AG04450 (cell line): ENCODE measurements at regions of chr14 and their contacts with region 1.

Region 1: DNA sequence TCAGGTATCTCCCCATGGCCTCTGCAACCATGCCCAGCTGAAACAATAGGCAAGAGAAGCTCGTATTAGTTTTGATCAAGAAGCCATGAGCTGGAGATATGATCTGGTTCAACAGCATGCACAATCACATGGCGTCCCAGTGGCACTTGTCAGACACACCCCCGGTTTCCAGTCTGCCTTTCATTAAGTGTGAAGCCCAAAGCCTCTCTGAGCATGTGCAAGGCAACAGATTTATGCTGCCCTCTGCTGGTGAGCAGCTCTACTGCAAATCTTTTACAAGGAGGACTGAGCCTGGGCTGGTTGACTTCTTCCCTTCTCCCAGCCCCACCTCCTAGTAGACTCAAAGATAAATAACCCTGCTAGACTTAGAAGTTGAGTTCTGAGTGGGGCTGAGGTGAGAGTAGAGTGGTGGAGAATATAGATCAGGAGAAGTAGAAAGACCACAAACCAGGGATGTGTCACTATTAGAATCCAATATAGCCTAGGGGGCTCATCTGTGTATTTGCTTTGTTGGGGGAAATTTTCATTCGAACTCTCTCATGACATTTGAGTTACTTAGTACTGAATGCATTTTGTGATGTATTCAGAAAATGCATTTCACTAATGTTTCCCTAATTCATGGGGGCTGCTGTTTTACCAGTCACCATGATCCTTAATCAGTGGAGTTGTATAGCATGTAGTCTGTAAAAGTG is 53.7 kb upstream of the MBIP start:
- DNase-seq: peak; percentile 56
- H3K4me3 ChIP-seq: no peak overlapping the region
- H3K27ac ChIP-seq: no peak overlapping the region
- H3K27me3 ChIP-seq: no peaks in the 10 kb centered on the region
- CTCF ChIP-seq: peak; percentile 91

Region 2: GRCh38 chr14:35708073-35708472 is 666.1 kb before region 1 on chr14:
- CTCF ChIA-PET with region 1: no interaction called
- POLR2A ChIA-PET with region 1: no interaction called
- DNase-seq: no peak
- H3K4me3 ChIP-seq: no peak overlapping the region
- H3K27ac ChIP-seq: no peak overlapping the region
- H3K27me3 ChIP-seq: no peaks in the 10 kb centered on the region
- CTCF ChIP-seq: no peak

Region 3: GRCh38 chr14:36111822-36112583 is 262.1 kb before region 1 on chr14:
- CTCF ChIA-PET with region 1: interaction called, 10 read pairs
- POLR2A ChIA-PET with region 1: no interaction called
- DNase-seq: no peak
- H3K4me3 ChIP-seq: no peak overlapping the region
- H3K27ac ChIP-seq: no peak overlapping the region
- H3K27me3 ChIP-seq: no peaks in the 10 kb centered on the region
- CTCF ChIP-seq: no peak

Region 4: GRCh38 chr14:36207500-36207899 is 166.6 kb before region 1 on chr14:
- CTCF ChIA-PET with region 1: interaction called, 39 read pairs
- POLR2A ChIA-PET with region 1: no interaction called
- DNase-seq: no peak
- H3K4me3 ChIP-seq: no peak overlapping the region
- H3K27ac ChIP-seq: no peak overlapping the region
- H3K27me3 ChIP-seq: no peaks in the 10 kb centered on the region
- CTCF ChIP-seq: peak; percentile 53